Transverse colon (tissue), 4 donors: ENCODE measurements at regions of chr9 and their contacts with region 1.

Region 1: GRCh38 chr9:26870292-26870691 is 22.3 kb downstream of the CAAP1 start:
- DNase-seq: no peak
- H3K4me3 ChIP-seq: no peak overlapping the region
- H3K27ac ChIP-seq: no peak overlapping the region
- H3K4me1 ChIP-seq: no peaks in the 10 kb centered on the region
- H3K27me3 ChIP-seq: no peaks in the 10 kb centered on the region
- CTCF ChIP-seq: no peak
- EP300 ChIP-seq: no peak
- POLR2A ChIP-seq: no peak

Region 2: DNA sequence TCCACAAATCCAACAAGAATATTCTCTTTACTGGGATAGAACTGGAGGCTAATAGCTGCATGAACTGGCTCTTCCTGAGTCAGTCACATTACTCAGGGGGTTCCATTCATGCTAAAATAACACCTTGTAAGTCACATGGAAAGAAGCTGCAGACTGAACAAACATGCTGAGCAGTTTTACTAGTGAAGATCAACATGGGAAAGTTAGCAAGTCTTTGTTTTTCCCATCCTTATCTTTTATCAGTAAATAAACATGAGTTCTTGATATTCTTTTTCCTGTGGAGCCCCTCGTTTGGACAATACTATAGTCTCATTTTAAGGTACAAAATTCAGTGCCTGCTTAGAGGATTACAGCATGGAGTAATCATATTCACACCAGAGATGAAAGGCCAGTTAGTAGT is 195.0 kb after region 1 on chr9:
- in situ Hi-C with region 1: no loop called
- intact Hi-C with region 1: no loop called
- DNase-seq: no peak
- H3K4me3 ChIP-seq: no peak overlapping the region
- H3K27ac ChIP-seq: no peak overlapping the region
- H3K4me1 ChIP-seq: peaks cover 0 to 3% (median 0%) of the 10 kb centered on the region in 4 donors
- H3K27me3 ChIP-seq: no peaks in the 10 kb centered on the region
- CTCF ChIP-seq: no peak
- EP300 ChIP-seq: no peak
- POLR2A ChIP-seq: no peak

Region 3: DNA sequence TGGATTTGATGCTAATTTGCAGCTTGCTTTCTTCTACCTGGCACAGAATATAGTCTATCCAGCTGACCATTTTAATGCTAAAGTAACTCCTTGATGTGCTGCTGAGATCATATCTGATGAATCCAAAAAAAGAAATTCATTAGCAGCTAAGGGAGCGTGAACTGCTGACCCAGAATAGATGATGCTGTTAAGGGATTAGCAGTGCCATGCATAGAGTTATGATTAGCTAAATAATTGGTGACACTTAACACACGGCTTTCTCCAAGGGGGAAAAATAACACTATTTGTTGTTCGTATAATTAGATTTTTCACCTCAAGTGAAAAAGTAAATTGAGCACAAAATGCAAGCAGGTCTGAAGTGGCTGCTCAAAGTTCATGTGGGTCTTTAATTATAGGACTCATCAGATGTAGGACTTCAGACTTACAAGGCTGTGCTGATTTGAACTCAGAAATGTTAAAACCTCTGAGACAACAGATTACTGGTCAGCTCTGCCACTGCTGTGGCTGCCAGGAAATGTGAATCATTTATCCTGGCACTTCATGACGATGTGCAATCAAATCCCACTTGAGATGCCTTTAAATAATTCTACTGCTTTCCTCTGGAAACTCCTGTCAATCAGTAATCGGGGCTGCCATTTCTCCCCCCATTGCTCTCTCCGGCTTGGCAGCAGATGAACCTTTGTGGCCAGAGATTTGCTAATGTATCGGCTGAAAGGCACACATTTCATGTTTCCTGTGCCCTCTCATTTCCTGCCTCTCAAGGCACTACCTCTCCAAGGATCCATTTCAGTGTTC is 994.5 kb after region 1 on chr9:
- in situ Hi-C with region 1: no loop called
- intact Hi-C with region 1: loop called (anchors 5 kb)
- DNase-seq: no peak
- H3K4me3 ChIP-seq: no peak overlapping the region
- H3K27ac ChIP-seq: no peak overlapping the region
- H3K4me1 ChIP-seq: no peaks in the 10 kb centered on the region
- H3K27me3 ChIP-seq: no peaks in the 10 kb centered on the region
- CTCF ChIP-seq: no peak
- EP300 ChIP-seq: no peak
- POLR2A ChIP-seq: no peak